ENCODE measurements at regions of chr16 and their contacts with region 1.

Region 1: GRCh38 chr16:79601931-79602627 is 1.5 kb upstream of the MAF start:
- DNase-seq: peak; percentile 13
- ATAC-seq: peak; percentile 74
- H3K4me3 ChIP-seq: no peak overlapping the region
- H3K27ac ChIP-seq: no peak overlapping the region
- H3K4me1 ChIP-seq: 0 out of 2 replicates have a peak, but pooled peaks cover 4% of the 10 kb centered on the region
- H3K27me3 ChIP-seq: peaks cover 3 to 12% of the 10 kb centered on the region in 2 experiments
- CTCF ChIP-seq: peak; percentile 63 to 70 (median 66)
- EP300 ChIP-seq: no peak
- POLR2A ChIP-seq: no peak
- RAD21 ChIP-seq: peak; percentile 75

Region 2: DNA sequence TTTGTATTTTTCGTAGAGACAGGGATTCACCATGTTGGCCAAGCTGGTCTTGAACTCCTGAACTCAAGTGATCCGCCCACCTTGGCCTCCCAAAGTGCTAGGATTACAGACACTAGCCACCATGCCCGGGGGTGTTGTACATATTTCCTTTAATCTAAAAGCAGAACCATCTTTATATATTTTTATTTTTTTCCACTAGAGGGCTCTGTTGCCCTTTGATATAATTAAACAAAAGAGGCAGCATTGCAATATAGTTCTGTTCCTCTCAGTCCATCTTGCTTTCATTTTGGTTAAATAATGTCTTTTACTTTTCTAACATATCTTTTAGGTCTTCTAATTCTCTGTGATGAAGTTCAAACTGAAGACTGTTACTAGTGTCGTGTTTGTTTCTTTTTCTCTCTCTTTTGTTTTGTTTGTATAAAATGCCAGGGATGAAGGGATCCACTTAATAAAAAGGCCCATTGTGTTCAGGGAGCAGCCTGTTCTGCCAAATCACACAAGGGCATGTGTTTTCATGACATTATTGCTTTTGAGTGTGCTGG is 1479.2 kb before region 1 on chr16:
- CTCF ChIA-PET with region 1: interaction called, 4 read pairs
- POLR2A ChIA-PET with region 1: no interaction called
- RAD21 ChIA-PET with region 1: no interaction called
- SMC1A ChIA-PET with region 1: interaction called, 3 read pairs
- in situ Hi-C with region 1: loop called (anchors 10 kb)
- intact Hi-C with region 1: no loop called
- DNase-seq: no peak
- ATAC-seq: peak; percentile 95
- H3K4me3 ChIP-seq: no peak overlapping the region
- H3K27ac ChIP-seq: no peak overlapping the region
- H3K4me1 ChIP-seq: no peaks in the 10 kb centered on the region; the same call in 1 of the 2 replicates
- H3K27me3 ChIP-seq: no peaks in the 10 kb centered on the region
- CTCF ChIP-seq: peak; percentile 8 to 51 (median 23); a peak in 3 of 6 replicates
- EP300 ChIP-seq: no peak
- POLR2A ChIP-seq: no peak
- RAD21 ChIP-seq: peak; percentile 52

Region 3: DNA sequence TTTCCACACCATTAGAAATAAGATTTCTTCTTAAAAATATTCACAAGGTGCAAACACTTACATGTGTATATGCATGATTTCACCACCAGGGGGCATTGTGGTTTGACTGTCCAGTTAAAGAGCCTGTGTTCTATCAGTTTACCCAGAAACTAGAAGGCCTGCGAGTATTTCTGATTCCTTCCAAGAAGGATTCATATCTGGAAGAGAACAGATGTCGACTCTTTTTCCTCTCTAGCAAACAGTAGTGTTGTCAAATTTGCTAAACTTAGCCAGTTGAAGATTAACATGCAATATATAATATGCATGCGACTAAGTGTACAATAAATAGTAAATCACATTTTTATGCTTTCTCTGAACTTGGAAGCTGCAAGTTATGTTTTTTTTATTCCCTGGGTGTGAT is 1098.5 kb before region 1 on chr16:
- CTCF ChIA-PET with region 1: interaction called, 3 read pairs
- POLR2A ChIA-PET with region 1: no interaction called
- RAD21 ChIA-PET with region 1: no interaction called
- SMC1A ChIA-PET with region 1: no interaction called
- in situ Hi-C with region 1: loop called (anchors 10 kb)
- intact Hi-C with region 1: loop called (anchors 5 kb)
- DNase-seq: no peak
- ATAC-seq: peak; percentile 55; the same call in 2 of the 3 replicates
- H3K4me3 ChIP-seq: no peak overlapping the region
- H3K27ac ChIP-seq: no peak overlapping the region
- H3K4me1 ChIP-seq: peaks cover 3% of the 10 kb centered on the region
- H3K27me3 ChIP-seq: no peaks in the 10 kb centered on the region
- CTCF ChIP-seq: peak; percentile 59 to 68 (median 64); a peak in 5 of 6 replicates
- EP300 ChIP-seq: no peak
- POLR2A ChIP-seq: no peak
- RAD21 ChIP-seq: peak; percentile 71

Region 4: GRCh38 chr16:78705694-78706093 is 896.4 kb before region 1 on chr16:
- CTCF ChIA-PET with region 1: interaction called, 4 read pairs
- POLR2A ChIA-PET with region 1: no interaction called
- RAD21 ChIA-PET with region 1: no interaction called
- SMC1A ChIA-PET with region 1: interaction called, 4 read pairs
- in situ Hi-C with region 1: no loop called
- intact Hi-C with region 1: loop called (anchors 5 kb)
- DNase-seq: peak; percentile 9
- ATAC-seq: peak; percentile 61
- H3K4me3 ChIP-seq: no peak overlapping the region
- H3K27ac ChIP-seq: no peak overlapping the region
- H3K4me1 ChIP-seq: no peaks in the 10 kb centered on the region
- H3K27me3 ChIP-seq: no peaks in the 10 kb centered on the region
- CTCF ChIP-seq: peak; percentile 51 to 58 (median 51); a peak in 4 of 6 replicates
- EP300 ChIP-seq: no peak
- POLR2A ChIP-seq: no peak
- RAD21 ChIP-seq: peak; percentile 88

Region 5: DNA sequence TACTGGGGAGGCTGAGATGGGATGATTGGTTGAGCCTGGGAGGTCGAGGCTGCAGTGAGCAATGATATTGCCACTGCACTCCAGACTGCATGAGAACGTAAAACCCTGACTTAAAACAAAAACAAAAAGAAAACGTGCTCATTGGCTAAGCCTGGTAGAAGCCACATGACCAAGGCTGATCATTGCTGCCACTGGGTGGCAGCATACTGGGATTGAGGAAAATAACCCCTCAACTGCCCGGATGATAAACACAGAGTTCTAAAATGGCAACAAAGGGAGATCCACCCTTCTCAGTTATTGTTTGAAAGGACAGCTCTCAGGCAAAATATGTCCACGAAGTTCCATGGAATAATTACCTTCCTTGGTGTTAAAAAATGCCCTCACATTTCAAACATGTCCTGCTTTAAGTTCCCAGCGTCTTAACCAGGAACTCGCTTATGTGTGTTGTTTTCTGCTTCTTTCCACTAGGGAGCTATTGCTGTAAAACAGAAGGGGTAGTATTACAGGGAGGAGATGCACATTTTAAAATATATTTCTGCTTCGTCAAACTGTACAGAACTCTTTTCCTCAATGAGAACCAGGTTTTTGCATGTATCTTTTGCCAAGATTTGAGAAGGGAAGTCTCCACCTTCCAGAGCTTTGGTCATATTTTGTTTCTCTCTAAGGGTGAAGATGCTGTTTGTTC is 676.9 kb before region 1 on chr16:
- CTCF ChIA-PET with region 1: interaction called, 3 read pairs
- POLR2A ChIA-PET with region 1: no interaction called
- RAD21 ChIA-PET with region 1: no interaction called
- SMC1A ChIA-PET with region 1: no interaction called
- in situ Hi-C with region 1: no loop called
- intact Hi-C with region 1: loop called (anchors 5 kb)
- DNase-seq: no peak
- ATAC-seq: peak; percentile 87
- H3K4me3 ChIP-seq: no peak overlapping the region
- H3K27ac ChIP-seq: no peak overlapping the region
- H3K4me1 ChIP-seq: no peaks in the 10 kb centered on the region
- H3K27me3 ChIP-seq: no peaks in the 10 kb centered on the region
- CTCF ChIP-seq: peak; percentile 34 to 50 (median 42); a peak in 4 of 6 replicates
- EP300 ChIP-seq: no peak
- POLR2A ChIP-seq: no peak
- RAD21 ChIP-seq: peak; percentile 51

Region 6: GRCh38 chr16:79547085-79547484 is 55.0 kb before region 1 on chr16:
- CTCF ChIA-PET with region 1: no interaction called
- POLR2A ChIA-PET with region 1: no interaction called
- RAD21 ChIA-PET with region 1: no interaction called
- SMC1A ChIA-PET with region 1: no interaction called
- in situ Hi-C with region 1: no loop called
- intact Hi-C with region 1: no loop called
- DNase-seq: no peak
- ATAC-seq: no peak
- H3K4me3 ChIP-seq: no peak overlapping the region
- H3K27ac ChIP-seq: no peak overlapping the region
- H3K4me1 ChIP-seq: no peaks in the 10 kb centered on the region
- H3K27me3 ChIP-seq: no peaks in the 10 kb centered on the region
- CTCF ChIP-seq: no peak
- EP300 ChIP-seq: no peak
- POLR2A ChIP-seq: no peak
- RAD21 ChIP-seq: no peak